Dorsolateral prefrontal cortex (tissue), 120 donors: ENCODE measurements at regions of chr19 and their contacts with region 1.

Region 1: DNA sequence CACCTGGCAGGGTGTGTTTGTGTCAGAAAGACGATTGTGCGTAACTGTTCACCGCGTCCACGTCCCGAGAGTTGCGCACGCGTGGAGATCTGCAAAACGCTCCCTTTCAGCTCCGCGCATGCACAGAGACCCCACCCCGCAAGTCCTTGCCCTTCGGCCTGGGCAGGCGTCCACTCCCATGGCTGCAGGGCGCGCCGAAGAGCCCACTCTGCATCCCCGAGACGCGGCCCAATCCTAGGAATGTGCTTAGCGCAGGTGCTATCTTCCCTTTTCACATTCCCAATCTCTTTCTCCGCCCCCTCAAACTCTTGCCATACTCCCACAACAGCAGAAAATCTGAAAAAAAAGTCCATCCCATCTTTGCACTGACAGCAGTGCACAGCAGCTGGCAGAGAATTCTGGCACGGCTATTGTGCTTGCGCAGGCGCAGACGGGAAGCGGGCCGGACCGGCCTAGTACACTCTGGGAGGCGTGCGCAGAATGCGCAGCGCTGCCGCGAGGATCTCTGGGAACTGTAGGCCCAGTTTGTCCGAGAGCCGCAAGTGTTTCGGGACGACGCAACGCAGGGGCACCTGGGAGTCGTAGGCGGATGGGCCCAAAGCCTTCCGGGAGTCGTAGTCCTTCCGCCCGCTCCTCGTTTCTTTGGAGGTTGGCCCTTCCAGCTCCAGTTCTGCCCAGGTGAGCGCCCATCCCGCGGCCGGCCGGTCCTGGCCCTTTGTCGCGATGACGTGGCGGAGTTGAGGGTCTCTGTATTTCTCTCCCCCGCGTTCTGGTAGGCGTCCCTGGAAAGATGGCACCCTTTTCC is 23.1 kb downstream of the ZNF175 start:
- DNase-seq: peak; percentile 99 to 100 (median 99)
- H3K4me3 ChIP-seq: peak overlapping the region; percentile 50 to 98 (median 80)
- H3K27ac ChIP-seq: peak overlapping the region in 56 of 59 donors; percentile 23 to 96 (median 85)
- H3K27me3 ChIP-seq: peaks cover 0 to 8% (median 0%) of the 10 kb centered on the region in 45 donors
- CTCF ChIP-seq: peak in 31 of 56 donors; percentile 1 to 58 (median 34)

Region 2: DNA sequence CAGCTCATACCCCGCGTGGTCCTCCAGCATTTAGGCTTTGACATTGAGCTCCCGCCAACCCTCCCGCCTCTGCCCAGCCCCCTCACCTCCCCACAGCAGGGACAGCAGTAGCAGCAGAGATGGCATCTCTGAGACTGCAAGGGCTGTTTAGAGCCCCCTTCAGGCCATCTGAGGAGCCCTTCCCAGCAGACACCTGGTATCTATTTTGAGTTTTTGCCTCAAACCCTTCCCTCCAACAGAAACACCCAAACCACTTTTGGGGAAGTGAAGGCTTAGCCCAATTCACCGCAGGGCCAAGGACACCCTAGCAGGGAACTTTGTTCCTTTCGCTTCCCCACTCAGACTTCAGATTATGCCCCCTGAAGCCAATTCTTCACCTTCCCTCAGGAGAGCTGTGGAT is 29.4 kb before region 1 on chr19:
- intact Hi-C with region 1: loop called in 1 of 2 experiments (anchors 5 kb)
- DNase-seq: no peak
- H3K4me3 ChIP-seq: no peak overlapping the region
- H3K27ac ChIP-seq: no peak overlapping the region
- H3K27me3 ChIP-seq: peaks cover 0 to 48% (median 14%) of the 10 kb centered on the region in 45 donors
- CTCF ChIP-seq: no peak

Region 3: GRCh38 chr19:51570962-51571575 is 23.1 kb before region 1 on chr19 and contains the start of gene ZNF175:
- intact Hi-C with region 1: loop called (anchors 1 kb)
- DNase-seq: peak; percentile 89 to 97 (median 94)
- H3K4me3 ChIP-seq: peak within 1 kb of the TSS; percentile 57 to 90 (median 77)
- H3K27ac ChIP-seq: peak within 1 kb of the TSS in 32 of 59 donors; percentile 1 to 79 (median 52)
- H3K27me3 ChIP-seq: peaks cover 0 to 10% (median 0%) of the 10 kb centered on the region in 45 donors
- CTCF ChIP-seq: peak in 37 of 56 donors; percentile 11 to 64 (median 35)
- total RNA-seq, gene ZNF175: 13.2 to 30.4 (median 19.9) TPM

Region 4: GRCh38 chr19:51703575-51704515 is 109.7 kb after region 1 on chr19:
- intact Hi-C with region 1: loop called in 1 of 2 experiments (anchors 5 kb)
- DNase-seq: peak; percentile 89 to 96 (median 94)
- H3K4me3 ChIP-seq: peak overlapping the region; percentile 46 to 97 (median 76)
- H3K27ac ChIP-seq: peak overlapping the region; percentile 63 to 98 (median 95)
- H3K27me3 ChIP-seq: no peaks in the 10 kb centered on the region
- CTCF ChIP-seq: peak; percentile 12 to 74 (median 57)